Panc1 (cell line): ENCODE measurements at regions of chr1 and their contacts with region 1.

Region 1: DNA sequence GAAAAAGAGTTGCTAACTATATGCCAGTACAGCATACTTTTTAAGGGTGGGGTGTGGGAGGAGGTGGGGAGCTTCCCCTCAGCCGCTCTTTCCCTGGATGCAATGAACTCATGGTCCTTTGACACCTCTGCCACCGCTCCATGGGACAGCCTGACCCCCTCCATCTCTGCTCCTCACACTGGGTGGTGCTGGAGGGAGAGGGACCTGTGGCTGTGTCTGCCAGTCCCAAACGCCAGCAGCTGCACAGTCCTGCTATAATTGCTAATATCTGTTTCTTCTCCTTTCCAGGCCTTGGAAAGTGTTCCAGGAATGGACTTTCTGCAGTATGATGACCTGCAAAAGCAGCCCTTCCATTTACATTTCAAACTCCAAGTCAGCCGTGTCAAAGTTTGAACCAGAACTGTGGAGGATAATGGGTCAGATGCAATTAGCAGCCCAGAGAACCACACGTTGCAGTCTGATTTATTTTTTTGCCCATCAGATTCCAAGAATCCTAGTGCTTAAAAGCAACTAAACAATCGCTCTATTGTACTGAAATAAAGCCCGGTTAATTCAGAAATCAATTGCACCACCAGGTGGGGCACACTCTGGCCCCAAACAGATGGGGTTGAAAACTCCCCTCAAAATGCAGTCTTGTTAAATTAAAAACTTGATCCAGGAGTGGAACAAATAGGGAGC is 160.7 kb upstream of the LMO4 start:
- DNase-seq: no peak
- ATAC-seq: no peak
- H3K4me3 ChIP-seq: no peak overlapping the region
- H3K27ac ChIP-seq: no peak overlapping the region
- H3K4me1 ChIP-seq: no peaks in the 10 kb centered on the region
- H3K27me3 ChIP-seq: peaks cover 11% of the 10 kb centered on the region
- CTCF ChIP-seq: peak; percentile 41; the same call in 1 of the 2 replicates

Region 2: GRCh38 chr1:87151500-87152421 is 16.2 kb before region 1 on chr1:
- CTCF ChIA-PET with region 1: no interaction called
- POLR2A ChIA-PET with region 1: no interaction called
- in situ Hi-C with region 1: no loop called
- intact Hi-C with region 1: no loop called
- DNase-seq: no peak
- ATAC-seq: peak; percentile 98
- H3K4me3 ChIP-seq: peak overlapping the region; percentile 5 to 38; a peak in 3 of 4 replicates
- H3K27ac ChIP-seq: no peak overlapping the region
- H3K4me1 ChIP-seq: no peaks in the 10 kb centered on the region
- H3K27me3 ChIP-seq: no peaks in the 10 kb centered on the region
- CTCF ChIP-seq: peak; percentile 90

Region 3: GRCh38 chr1:87266284-87266683 is 98.3 kb after region 1 on chr1:
- CTCF ChIA-PET with region 1: no interaction called
- POLR2A ChIA-PET with region 1: no interaction called
- in situ Hi-C with region 1: no loop called
- intact Hi-C with region 1: loop called (anchors 10 kb)
- DNase-seq: no peak
- ATAC-seq: no peak
- H3K4me3 ChIP-seq: no peak overlapping the region
- H3K27ac ChIP-seq: no peak overlapping the region
- H3K4me1 ChIP-seq: no peaks in the 10 kb centered on the region
- H3K27me3 ChIP-seq: peaks cover 21% of the 10 kb centered on the region
- CTCF ChIP-seq: no peak